Left ventricle myocardium superior (tissue), 1 donor: ENCODE measurements at regions of chr5 and their contacts with region 1.

Region 1: GRCh38 chr5:119409235-119409815 is 43.0 kb upstream of the HSD17B4 start:
- DNase-seq: no peak
- ATAC-seq: no peak

Region 2: DNA sequence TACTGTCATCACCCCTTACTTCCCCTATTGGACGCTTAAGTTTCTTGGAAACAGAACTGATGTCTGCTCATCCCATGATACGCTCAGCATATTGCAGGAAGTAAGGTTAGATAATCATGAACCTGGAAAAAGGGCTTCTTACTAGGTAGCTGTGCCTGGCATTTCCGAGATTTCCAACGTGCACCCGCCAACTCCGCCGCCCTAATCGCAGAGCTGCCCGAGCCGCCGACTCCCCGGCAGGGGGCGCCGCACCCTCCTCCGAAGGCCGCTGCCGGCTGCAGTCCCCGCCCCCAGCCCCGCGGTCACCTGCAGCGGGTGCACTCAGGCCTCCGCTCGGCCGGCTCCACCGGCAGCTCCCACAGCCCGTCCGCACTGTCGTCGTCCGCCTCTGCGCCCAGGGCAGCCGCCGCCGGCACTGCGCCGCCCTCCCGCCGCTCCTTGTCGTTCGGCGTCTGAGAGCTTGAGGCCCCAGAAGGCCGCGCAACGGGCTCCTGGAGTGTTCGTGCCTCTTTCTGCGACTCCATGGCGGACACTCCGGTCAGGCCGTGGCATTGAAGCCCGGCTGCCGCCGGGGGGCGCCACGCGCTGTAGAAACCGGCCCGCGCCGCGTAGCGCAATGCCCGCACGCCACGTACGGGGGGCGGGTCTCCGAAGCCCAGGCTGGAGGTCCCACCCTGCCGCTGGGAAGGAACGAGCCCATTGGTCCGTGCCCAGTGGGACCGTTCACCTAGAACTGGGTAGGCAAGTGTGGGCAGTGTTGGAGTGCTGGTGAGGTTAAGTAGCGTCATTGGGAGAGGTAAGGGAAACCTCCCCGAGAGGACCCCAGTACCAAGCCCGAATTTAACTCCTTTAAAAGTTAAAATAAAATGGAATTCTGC is 421.1 kb before region 1 on chr5 and contains the start of gene DTWD2:
- intact Hi-C with region 1: loop called (anchors 10 kb)
- DNase-seq: peak; percentile 97
- ATAC-seq: peak; percentile 98
- total RNA-seq, gene DTWD2: 15.0 TPM

Region 3: DNA sequence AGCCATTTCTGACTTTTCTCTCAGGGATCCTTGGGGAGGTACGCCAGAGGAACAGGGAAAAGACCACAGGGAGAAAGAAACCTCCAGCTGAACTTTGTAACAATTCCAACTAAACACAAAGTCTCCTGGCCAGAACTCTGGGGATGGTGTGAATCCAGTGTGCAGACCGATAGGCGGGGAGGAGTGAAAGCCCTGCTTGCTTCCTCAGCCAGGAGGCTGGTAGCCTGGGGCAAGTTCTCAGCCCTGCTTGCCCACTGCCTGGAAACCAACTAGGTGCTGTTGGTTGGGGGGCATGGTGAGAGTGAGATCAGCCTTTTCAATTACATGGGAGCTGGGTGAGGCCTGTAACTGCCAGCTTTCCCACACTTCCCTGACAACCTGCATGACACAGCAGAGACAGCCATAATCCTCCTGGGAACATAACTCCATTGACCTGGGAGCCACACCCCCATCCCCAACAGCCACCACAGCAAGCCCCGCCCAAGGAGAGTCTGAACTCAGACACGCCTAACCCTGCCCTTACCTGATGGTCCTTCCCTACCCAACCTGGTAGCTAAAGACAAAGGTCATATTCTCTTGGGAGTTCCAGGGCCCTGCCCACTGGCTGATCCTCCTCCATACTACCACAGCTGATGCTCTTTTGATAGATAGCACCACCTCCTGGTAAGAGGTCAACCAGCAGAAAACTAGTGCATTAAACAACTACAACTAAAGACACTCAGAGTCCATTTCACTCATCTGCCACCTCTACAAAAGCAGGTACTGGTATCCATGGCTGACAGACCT is 153.6 kb before region 1 on chr5:
- intact Hi-C with region 1: no loop called
- DNase-seq: no peak
- ATAC-seq: no peak